ENCODE measurements at regions of chr5 and their contacts with region 1.

Region 1: DNA sequence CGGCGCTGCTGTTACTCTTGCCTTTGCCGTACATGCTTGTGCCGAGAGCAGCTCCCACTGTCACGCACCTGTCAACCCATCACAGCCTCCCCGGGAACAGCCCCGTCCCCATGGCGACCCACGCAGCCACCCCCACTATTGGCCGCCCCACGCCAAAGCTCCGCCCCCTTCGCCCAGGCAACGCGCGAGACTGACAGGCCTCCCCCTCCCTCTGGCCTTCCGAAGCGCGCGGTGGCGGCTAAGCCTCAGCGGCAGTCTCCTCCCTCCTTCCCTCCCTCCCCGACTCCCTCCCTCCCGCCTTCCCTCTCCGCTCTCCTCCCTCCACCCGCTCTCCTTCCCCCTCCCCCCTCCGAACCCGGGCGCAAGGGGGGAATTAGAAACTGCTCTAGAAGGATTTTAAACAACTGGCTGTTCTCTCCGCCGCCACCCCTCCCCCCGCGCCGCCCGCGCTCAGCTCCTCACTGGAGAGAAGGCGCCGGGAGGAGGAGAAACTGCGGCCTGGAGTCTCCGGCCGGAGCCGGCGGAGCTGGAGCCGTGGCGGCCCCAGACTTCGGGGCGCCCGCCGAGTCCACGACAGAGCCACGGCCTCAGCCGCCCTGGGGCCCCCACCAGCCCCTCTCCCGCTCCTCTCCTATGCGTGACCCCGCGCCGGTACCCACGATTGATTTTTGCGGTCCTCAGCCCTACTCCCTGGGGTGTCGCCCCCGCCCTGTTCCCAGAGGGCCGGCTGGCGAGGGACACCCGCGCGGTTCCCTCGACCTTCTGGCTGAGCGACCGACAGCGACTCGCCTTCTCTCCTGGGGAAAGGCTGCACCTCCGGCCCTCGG is at the start of gene SSBP2:
- DNase-seq: peak; percentile 99 to 100 (median 99)
- ATAC-seq: peak; percentile 90
- H3K4me3 ChIP-seq: peak within 1 kb of the TSS; percentile 75 to 76
- H3K4me3 Mint-ChIP-seq: peak within 1 kb of the TSS; percentile 97
- H3K27ac ChIP-seq: peak within 1 kb of the TSS; percentile 76 to 84
- H3K27ac Mint-ChIP-seq: peak within 1 kb of the TSS; percentile 94
- H3K4me1 ChIP-seq: peaks cover 17% of the 10 kb centered on the region
- H3K4me1 Mint-ChIP-seq: peaks cover 33% of the 10 kb centered on the region
- H3K27me3 ChIP-seq: no peaks in the 10 kb centered on the region
- H3K27me3 Mint-ChIP-seq: no peaks in the 10 kb centered on the region
- CTCF ChIP-seq: no peak
- total RNA-seq, gene SSBP2: 21.7 to 22.5 TPM

Region 2: GRCh38 chr5:80407735-80408482 is 1343.3 kb before region 1 on chr5 and contains the start of gene ZFYVE16:
- CTCF ChIA-PET with region 1: no interaction called
- POLR2A ChIA-PET with region 1: no interaction called
- intact Hi-C with region 1: loop called in 1 of 2 experiments (anchors 10 kb)
- DNase-seq: peak; percentile 91 to 99 (median 97)
- ATAC-seq: peak; percentile 88
- H3K4me3 ChIP-seq: peak within 1 kb of the TSS; percentile 86 to 94
- H3K4me3 Mint-ChIP-seq: peak within 1 kb of the TSS; percentile 99
- H3K27ac ChIP-seq: peak within 1 kb of the TSS; percentile 78 to 93
- H3K27ac Mint-ChIP-seq: peak within 1 kb of the TSS; percentile 100
- H3K4me1 ChIP-seq: peaks cover 12% of the 10 kb centered on the region
- H3K4me1 Mint-ChIP-seq: peaks cover 28% of the 10 kb centered on the region
- H3K27me3 ChIP-seq: no peaks in the 10 kb centered on the region
- H3K27me3 Mint-ChIP-seq: no peaks in the 10 kb centered on the region
- CTCF ChIP-seq: no peak
- total RNA-seq, gene ZFYVE16: 7.6 to 9.9 TPM

Region 3: DNA sequence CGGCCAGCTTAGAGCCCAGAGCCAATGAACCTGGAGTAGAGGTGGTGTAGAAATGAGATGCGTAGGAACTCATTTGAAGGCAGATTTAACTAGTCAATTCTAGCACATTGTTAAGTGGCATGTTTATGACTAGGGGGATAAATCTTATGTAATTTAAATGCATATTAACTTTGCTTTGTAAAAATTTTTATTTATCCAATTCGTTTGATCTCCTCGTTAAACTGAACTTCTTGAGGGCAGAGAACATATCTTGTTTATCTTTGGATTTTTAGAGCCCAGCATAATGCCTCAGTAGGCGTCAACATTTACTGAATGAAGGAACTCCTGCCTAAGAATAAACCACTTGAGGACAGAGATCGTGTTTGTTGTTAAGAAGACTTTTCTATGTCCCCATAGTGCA is 316.2 kb before region 1 on chr5:
- CTCF ChIA-PET with region 1: no interaction called
- POLR2A ChIA-PET with region 1: no interaction called
- intact Hi-C with region 1: no loop called
- DNase-seq: no peak
- ATAC-seq: no peak
- H3K4me3 ChIP-seq: no peak overlapping the region
- H3K4me3 Mint-ChIP-seq: no peak overlapping the region
- H3K27ac ChIP-seq: no peak overlapping the region
- H3K27ac Mint-ChIP-seq: no peak overlapping the region
- H3K4me1 ChIP-seq: no peaks in the 10 kb centered on the region
- H3K4me1 Mint-ChIP-seq: no peaks in the 10 kb centered on the region
- H3K27me3 ChIP-seq: no peaks in the 10 kb centered on the region
- H3K27me3 Mint-ChIP-seq: no peaks in the 10 kb centered on the region
- CTCF ChIP-seq: no peak

Region 4: GRCh38 chr5:81506900-81507588 is 244.2 kb before region 1 on chr5:
- CTCF ChIA-PET with region 1: no interaction called
- POLR2A ChIA-PET with region 1: no interaction called
- intact Hi-C with region 1: loop called in 1 of 2 experiments (anchors 5 kb)
- DNase-seq: peak in 7 of 9 experiments; percentile 2 to 72 (median 28)
- ATAC-seq: peak; percentile 65
- H3K4me3 ChIP-seq: no peak overlapping the region
- H3K4me3 Mint-ChIP-seq: no peak overlapping the region
- H3K27ac ChIP-seq: no peak overlapping the region
- H3K27ac Mint-ChIP-seq: no peak overlapping the region
- H3K4me1 ChIP-seq: no peaks in the 10 kb centered on the region
- H3K4me1 Mint-ChIP-seq: no peaks in the 10 kb centered on the region
- H3K27me3 ChIP-seq: no peaks in the 10 kb centered on the region
- H3K27me3 Mint-ChIP-seq: no peaks in the 10 kb centered on the region
- CTCF ChIP-seq: peak; percentile 66

Region 5: GRCh38 chr5:81696418-81697397 is 54.5 kb before region 1 on chr5:
- CTCF ChIA-PET with region 1: no interaction called
- POLR2A ChIA-PET with region 1: no interaction called
- intact Hi-C with region 1: no loop called
- DNase-seq: no peak
- ATAC-seq: no peak
- H3K4me3 ChIP-seq: no peak overlapping the region
- H3K4me3 Mint-ChIP-seq: no peak overlapping the region
- H3K27ac ChIP-seq: no peak overlapping the region
- H3K27ac Mint-ChIP-seq: peak overlapping the region; percentile 41
- H3K4me1 ChIP-seq: no peaks in the 10 kb centered on the region
- H3K4me1 Mint-ChIP-seq: peaks cover 18% of the 10 kb centered on the region
- H3K27me3 ChIP-seq: no peaks in the 10 kb centered on the region
- H3K27me3 Mint-ChIP-seq: no peaks in the 10 kb centered on the region
- CTCF ChIP-seq: no peak

Region 6: GRCh38 chr5:81728301-81728700 is 22.9 kb before region 1 on chr5:
- CTCF ChIA-PET with region 1: no interaction called
- POLR2A ChIA-PET with region 1: no interaction called
- intact Hi-C with region 1: loop called in 1 of 2 experiments (anchors 2 kb)
- DNase-seq: no peak
- ATAC-seq: no peak
- H3K4me3 ChIP-seq: no peak overlapping the region
- H3K4me3 Mint-ChIP-seq: no peak overlapping the region
- H3K27ac ChIP-seq: no peak overlapping the region
- H3K27ac Mint-ChIP-seq: no peak overlapping the region
- H3K4me1 ChIP-seq: no peaks in the 10 kb centered on the region
- H3K4me1 Mint-ChIP-seq: peaks cover 43% of the 10 kb centered on the region
- H3K27me3 ChIP-seq: no peaks in the 10 kb centered on the region
- H3K27me3 Mint-ChIP-seq: no peaks in the 10 kb centered on the region
- CTCF ChIP-seq: no peak

Region 7: DNA sequence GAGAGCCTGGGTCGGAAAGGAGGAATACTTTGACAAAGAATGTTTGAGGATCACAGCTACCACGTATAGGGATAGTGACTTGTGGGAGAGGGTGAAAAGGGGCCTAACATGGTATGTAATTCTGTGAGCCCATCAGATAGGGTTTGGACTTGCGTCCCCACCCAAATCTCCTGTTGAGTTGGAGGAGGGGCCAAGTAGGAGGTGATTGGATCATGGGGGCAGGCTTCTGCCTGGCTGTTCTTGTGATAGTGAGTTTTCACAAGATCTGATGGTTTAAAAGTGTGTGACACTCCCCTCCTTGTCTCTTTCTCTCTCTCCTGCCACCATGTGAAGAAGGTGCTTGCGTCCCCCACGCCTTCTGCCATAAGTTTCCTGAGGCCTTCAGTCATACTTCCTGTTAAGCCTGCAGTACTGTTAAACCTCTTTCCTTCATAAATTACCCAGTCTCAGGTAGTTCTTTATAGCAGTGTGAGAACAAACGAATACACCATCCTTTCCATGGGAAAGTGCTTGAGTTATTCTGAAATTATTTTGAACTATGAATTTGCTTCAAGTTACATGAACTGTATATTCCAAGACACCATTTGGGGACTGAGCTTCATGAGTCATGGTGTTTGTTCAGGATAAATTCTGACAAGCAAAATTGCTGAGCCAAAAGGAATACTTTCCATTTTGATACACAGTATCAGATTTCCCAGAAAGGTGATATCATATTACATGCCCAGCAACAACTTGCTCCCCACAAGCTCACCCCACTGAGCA is 68.5 kb after region 1 on chr5:
- CTCF ChIA-PET with region 1: no interaction called
- POLR2A ChIA-PET with region 1: interaction called, 4 read pairs
- intact Hi-C with region 1: loop called in 1 of 2 experiments (anchors 2 kb)
- DNase-seq: no peak
- ATAC-seq: no peak
- H3K4me3 ChIP-seq: no peak overlapping the region
- H3K4me3 Mint-ChIP-seq: no peak overlapping the region
- H3K27ac ChIP-seq: no peak overlapping the region
- H3K27ac Mint-ChIP-seq: peak overlapping the region; percentile 3
- H3K4me1 ChIP-seq: peaks cover 22% of the 10 kb centered on the region
- H3K4me1 Mint-ChIP-seq: peaks cover 42% of the 10 kb centered on the region
- H3K27me3 ChIP-seq: no peaks in the 10 kb centered on the region
- H3K27me3 Mint-ChIP-seq: no peaks in the 10 kb centered on the region
- CTCF ChIP-seq: no peak

Region 8: GRCh38 chr5:81971712-81972495 is 220.7 kb after region 1 on chr5 and contains the start of gene ATG10:
- CTCF ChIA-PET with region 1: no interaction called
- POLR2A ChIA-PET with region 1: interaction called, 8 read pairs
- intact Hi-C with region 1: loop called (anchors 1 to 2 kb)
- DNase-seq: peak; percentile 75 to 95 (median 86)
- ATAC-seq: peak; percentile 85
- H3K4me3 ChIP-seq: peak within 1 kb of the TSS; percentile 85 to 99
- H3K4me3 Mint-ChIP-seq: peak within 1 kb of the TSS; percentile 100
- H3K27ac ChIP-seq: peak within 1 kb of the TSS; percentile 96 to 97
- H3K27ac Mint-ChIP-seq: peak within 1 kb of the TSS; percentile 100
- H3K4me1 ChIP-seq: peaks cover 12% of the 10 kb centered on the region
- H3K4me1 Mint-ChIP-seq: peaks cover 31% of the 10 kb centered on the region
- H3K27me3 ChIP-seq: no peaks in the 10 kb centered on the region
- H3K27me3 Mint-ChIP-seq: no peaks in the 10 kb centered on the region
- CTCF ChIP-seq: no peak
- total RNA-seq, gene ATG10: 4.7 to 5.7 TPM

Region 9: DNA sequence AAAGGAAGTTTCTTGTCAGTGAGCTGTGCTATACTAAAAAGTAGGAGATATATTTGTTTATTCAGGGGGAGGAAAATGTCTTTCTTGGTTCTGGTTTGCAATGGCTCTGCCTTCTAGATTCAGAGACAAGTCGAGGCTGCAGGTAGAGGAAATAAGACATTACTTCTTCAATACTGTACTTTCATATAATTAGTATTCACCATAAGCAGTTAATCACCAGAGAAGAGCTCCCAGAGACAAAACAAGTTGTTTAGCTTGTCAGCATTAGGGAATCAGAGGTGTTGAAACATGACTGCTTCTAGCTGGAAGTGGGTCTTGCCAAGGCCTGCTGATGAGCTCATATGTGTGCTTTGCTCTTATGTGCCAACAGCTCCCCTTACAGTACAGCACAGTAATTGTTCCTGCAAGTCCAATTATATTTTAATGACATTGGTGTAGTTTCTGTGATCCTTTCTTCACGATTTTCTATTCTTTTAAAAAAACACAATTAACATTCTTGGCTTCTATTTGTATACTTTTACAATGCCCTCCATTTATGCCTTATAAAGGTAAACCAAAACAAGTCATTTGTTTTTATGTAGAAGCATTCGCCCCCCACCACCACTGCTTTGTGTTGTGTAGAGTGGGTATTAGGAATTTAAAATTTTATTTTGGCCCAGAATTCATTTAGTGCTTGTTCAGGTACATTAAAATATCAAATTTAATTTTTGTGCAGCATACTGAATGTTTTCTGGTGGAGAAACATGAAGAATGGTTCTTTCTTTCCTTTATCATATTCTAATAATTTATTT is 414.7 kb after region 1 on chr5:
- CTCF ChIA-PET with region 1: no interaction called
- POLR2A ChIA-PET with region 1: no interaction called
- intact Hi-C with region 1: loop called in 1 of 2 experiments (anchors 5 kb)
- DNase-seq: peak in 7 of 9 experiments; percentile 1 to 76 (median 30)
- ATAC-seq: peak; percentile 99
- H3K4me3 ChIP-seq: no peak overlapping the region
- H3K4me3 Mint-ChIP-seq: no peak overlapping the region
- H3K27ac ChIP-seq: no peak overlapping the region
- H3K27ac Mint-ChIP-seq: no peak overlapping the region
- H3K4me1 ChIP-seq: no peaks in the 10 kb centered on the region
- H3K4me1 Mint-ChIP-seq: no peaks in the 10 kb centered on the region
- H3K27me3 ChIP-seq: no peaks in the 10 kb centered on the region
- H3K27me3 Mint-ChIP-seq: no peaks in the 10 kb centered on the region
- CTCF ChIP-seq: peak; percentile 78

Measured in CD8-positive, alpha-beta T cell (primary cell).